GM12878 (cell line): ENCODE measurements at regions of chr2 and their contacts with region 1.

Region 1: DNA sequence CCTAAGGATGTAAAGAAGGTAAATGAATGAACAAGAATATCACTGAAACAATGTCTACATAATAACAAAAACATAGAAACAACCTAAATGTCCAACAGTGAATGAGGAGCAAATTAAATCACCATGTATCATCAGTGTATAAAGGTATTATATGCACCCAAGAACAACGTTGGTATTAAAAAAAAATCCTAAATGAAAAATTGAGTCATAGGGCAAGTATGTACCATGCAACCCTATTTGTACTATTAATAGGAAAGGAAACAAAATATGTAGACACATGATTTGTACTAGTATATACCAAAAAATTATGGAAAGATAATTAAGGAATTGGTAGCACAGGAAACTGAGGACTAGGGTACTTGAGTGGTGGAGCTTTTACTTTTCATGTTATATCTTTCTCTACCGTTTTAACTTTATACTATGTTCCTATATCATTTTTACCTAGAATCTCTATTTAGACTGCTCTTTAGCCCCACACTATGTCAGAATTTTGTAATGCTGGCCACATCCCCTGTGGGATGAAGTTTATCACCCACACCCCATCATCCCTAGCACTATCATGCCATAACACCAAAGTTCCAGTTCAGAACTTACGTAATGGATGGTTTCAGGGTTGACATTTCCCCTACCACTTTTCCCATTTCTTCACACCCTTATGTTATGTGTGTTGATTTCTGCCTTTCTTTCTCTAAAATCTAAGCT is 25.6 kb downstream of the IKZF2 start:
- DNase-seq: no peak
- ATAC-seq: peak; percentile 53
- H3K4me3 ChIP-seq: no peak overlapping the region
- H3K27ac ChIP-seq: no peak overlapping the region
- H3K4me1 ChIP-seq: peaks cover 20% of the 10 kb centered on the region; the same call in 1 of the 2 replicates
- H3K27me3 ChIP-seq: no peaks in the 10 kb centered on the region
- CTCF ChIP-seq: peak in 2 of 3 experiments; percentile 7 to 9; a peak in 1 of 6 replicates
- EP300 ChIP-seq: no peak
- POLR2A ChIP-seq: no peak
- RAD21 ChIP-seq: peak; percentile 22; the same call in 1 of the 2 replicates

Region 2: DNA sequence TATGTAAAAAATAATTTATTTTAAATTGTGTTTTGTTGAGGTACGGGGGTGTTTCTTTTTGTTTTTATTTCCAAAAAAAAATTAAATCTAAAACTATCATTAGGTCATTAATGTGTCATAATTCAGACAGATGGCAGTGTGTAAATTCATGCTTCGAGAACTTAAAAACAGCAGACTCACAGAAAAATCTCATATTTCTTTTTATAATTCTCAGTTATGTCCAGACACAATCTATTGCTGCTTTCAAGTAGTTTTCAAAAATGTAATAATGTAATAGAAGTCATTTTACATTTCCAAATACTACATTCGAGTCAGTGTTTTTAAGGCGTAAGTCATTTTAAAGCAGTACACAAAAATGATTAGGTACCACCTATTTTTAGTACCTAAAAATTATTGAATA is 11.3 kb after region 1 on chr2:
- CTCF ChIA-PET with region 1: interaction called, 7 read pairs
- POLR2A ChIA-PET with region 1: interaction called, 8 read pairs
- RAD21 ChIA-PET with region 1: interaction called, 9 read pairs
- SMC1A ChIA-PET with region 1: interaction called, 25 read pairs
- in situ Hi-C with region 1: no loop called
- intact Hi-C with region 1: no loop called
- DNase-seq: no peak
- ATAC-seq: no peak
- H3K4me3 ChIP-seq: no peak overlapping the region
- H3K27ac ChIP-seq: no peak overlapping the region
- H3K4me1 ChIP-seq: no peaks in the 10 kb centered on the region
- H3K27me3 ChIP-seq: no peaks in the 10 kb centered on the region
- CTCF ChIP-seq: no peak
- EP300 ChIP-seq: no peak
- POLR2A ChIP-seq: no peak
- RAD21 ChIP-seq: no peak

Region 3: GRCh38 chr2:213145715-213146242 is 20.0 kb after region 1 on chr2:
- CTCF ChIA-PET with region 1: interaction called, 19 read pairs
- POLR2A ChIA-PET with region 1: interaction called, 6 read pairs
- RAD21 ChIA-PET with region 1: interaction called, 11 read pairs
- SMC1A ChIA-PET with region 1: interaction called, 56 read pairs
- in situ Hi-C with region 1: no loop called
- intact Hi-C with region 1: no loop called
- DNase-seq: no peak
- ATAC-seq: peak; percentile 9
- H3K4me3 ChIP-seq: peak overlapping the region; percentile 60
- H3K27ac ChIP-seq: peak overlapping the region; percentile 9; the same call in 1 of the 2 replicates
- H3K4me1 ChIP-seq: no peaks in the 10 kb centered on the region
- H3K27me3 ChIP-seq: no peaks in the 10 kb centered on the region
- CTCF ChIP-seq: no peak
- EP300 ChIP-seq: no peak
- POLR2A ChIP-seq: no peak
- RAD21 ChIP-seq: no peak

Region 4: GRCh38 chr2:213175526-213176162 is 49.8 kb after region 1 on chr2:
- CTCF ChIA-PET with region 1: no interaction called
- POLR2A ChIA-PET with region 1: no interaction called
- RAD21 ChIA-PET with region 1: no interaction called
- SMC1A ChIA-PET with region 1: no interaction called
- in situ Hi-C with region 1: no loop called
- intact Hi-C with region 1: no loop called
- DNase-seq: no peak
- ATAC-seq: no peak
- H3K4me3 ChIP-seq: no peak overlapping the region
- H3K27ac ChIP-seq: no peak overlapping the region
- H3K4me1 ChIP-seq: peaks cover 7% of the 10 kb centered on the region; the same call in 1 of the 2 replicates
- H3K27me3 ChIP-seq: no peaks in the 10 kb centered on the region
- CTCF ChIP-seq: no peak
- EP300 ChIP-seq: no peak
- POLR2A ChIP-seq: no peak
- RAD21 ChIP-seq: no peak